ENCODE measurements at regions of chr14 and their contacts with region 1.

Region 1: GRCh38 chr14:67704484-67705089 is 2.9 kb downstream of the RDH12 start:
- DNase-seq: no peak
- ATAC-seq: peak; percentile 94
- H3K4me3 Mint-ChIP-seq: no peak overlapping the region
- H3K27ac Mint-ChIP-seq: no peak overlapping the region
- H3K4me1 Mint-ChIP-seq: 0 out of 2 replicates have a peak, but pooled peaks cover 3% of the 10 kb centered on the region
- H3K27me3 Mint-ChIP-seq: no peaks in the 10 kb centered on the region
- CTCF ChIP-seq: no peak

Region 2: GRCh38 chr14:67420102-67420830 is 284.3 kb before region 1 on chr14:
- CTCF ChIA-PET with region 1: interaction called, 15 read pairs
- POLR2A ChIA-PET with region 1: no interaction called
- DNase-seq: peak; percentile 85
- ATAC-seq: peak; percentile 93
- H3K4me3 Mint-ChIP-seq: no peak overlapping the region
- H3K27ac Mint-ChIP-seq: no peak overlapping the region
- H3K4me1 Mint-ChIP-seq: no peaks in the 10 kb centered on the region
- H3K27me3 Mint-ChIP-seq: no peaks in the 10 kb centered on the region; the same call in 1 of the 2 replicates
- CTCF ChIP-seq: peak; percentile 62; the same call in 1 of the 2 replicates

Region 3: GRCh38 chr14:67541448-67542387 is 162.9 kb before region 1 on chr14:
- CTCF ChIA-PET with region 1: interaction called, 10 read pairs
- POLR2A ChIA-PET with region 1: no interaction called
- DNase-seq: peak; percentile 67
- ATAC-seq: peak; percentile 91
- H3K4me3 Mint-ChIP-seq: peak overlapping the region; percentile 63
- H3K27ac Mint-ChIP-seq: peak overlapping the region; percentile 99
- H3K4me1 Mint-ChIP-seq: peaks cover 50% of the 10 kb centered on the region
- H3K27me3 Mint-ChIP-seq: no peaks in the 10 kb centered on the region
- CTCF ChIP-seq: no peak

Region 4: GRCh38 chr14:67599698-67600561 is 104.7 kb before region 1 on chr14 and contains the start of gene PIGH:
- CTCF ChIA-PET with region 1: interaction called, 34 read pairs
- POLR2A ChIA-PET with region 1: interaction called, 3 read pairs
- DNase-seq: peak; percentile 92
- ATAC-seq: peak; percentile 97
- H3K4me3 Mint-ChIP-seq: peak within 1 kb of the TSS; percentile 90
- H3K27ac Mint-ChIP-seq: peak within 1 kb of the TSS; percentile 88
- H3K4me1 Mint-ChIP-seq: peaks cover 8% of the 10 kb centered on the region
- H3K27me3 Mint-ChIP-seq: peaks cover 56% of the 10 kb centered on the region
- CTCF ChIP-seq: 0 out of 2 replicates have a peak, but pooled peaks have one; percentile 22
- total RNA-seq, gene PIGH: 6.6 to 7.8 TPM (median 6.8 TPM) in 3 replicates

Region 5: DNA sequence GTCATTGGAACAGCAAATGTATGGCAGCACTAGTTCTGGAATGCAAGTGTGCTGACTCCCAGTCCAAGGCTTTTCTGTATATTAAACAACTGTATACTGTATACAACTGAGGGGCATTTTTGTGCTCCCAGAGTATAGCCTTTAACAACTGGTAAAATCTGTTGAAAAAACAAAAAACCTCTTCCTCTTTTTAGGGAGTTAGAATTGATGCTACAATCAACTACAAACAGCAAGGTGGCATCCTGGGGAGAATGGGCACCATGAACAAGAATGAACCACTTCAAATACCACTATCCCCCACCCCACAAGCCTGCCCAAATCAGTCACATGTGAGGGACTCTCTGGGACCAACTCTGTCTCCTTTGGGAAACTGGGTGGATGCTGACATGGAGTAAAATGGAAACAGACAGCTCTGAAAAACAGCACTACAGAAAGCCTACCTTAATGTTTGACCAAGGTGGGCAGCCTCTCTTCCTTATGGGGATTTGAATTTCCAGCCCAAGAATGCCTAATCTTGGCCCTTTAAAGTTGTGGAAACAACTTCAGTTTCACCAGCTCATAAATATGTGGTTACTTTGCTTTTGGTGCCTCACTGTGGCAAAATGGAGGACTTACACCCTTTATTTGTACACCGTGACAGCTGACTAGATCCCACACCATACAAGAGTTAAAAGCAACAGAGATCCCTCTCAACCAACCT is 37.7 kb before region 1 on chr14:
- CTCF ChIA-PET with region 1: interaction called, 21 read pairs
- POLR2A ChIA-PET with region 1: interaction called, 3 read pairs
- DNase-seq: no peak
- ATAC-seq: peak; percentile 93
- H3K4me3 Mint-ChIP-seq: no peak overlapping the region
- H3K27ac Mint-ChIP-seq: peak overlapping the region; percentile 85
- H3K4me1 Mint-ChIP-seq: peaks cover 13% of the 10 kb centered on the region
- H3K27me3 Mint-ChIP-seq: no peaks in the 10 kb centered on the region
- CTCF ChIP-seq: no peak

Region 6: GRCh38 chr14:67722293-67722692 is 17.7 kb after region 1 on chr14:
- CTCF ChIA-PET with region 1: interaction called, 18 read pairs
- POLR2A ChIA-PET with region 1: interaction called, 3 read pairs
- DNase-seq: peak; percentile 35
- ATAC-seq: peak; percentile 99
- H3K4me3 Mint-ChIP-seq: peak overlapping the region; percentile 47
- H3K27ac Mint-ChIP-seq: no peak overlapping the region
- H3K4me1 Mint-ChIP-seq: no peaks in the 10 kb centered on the region; the same call in 1 of the 2 replicates
- H3K27me3 Mint-ChIP-seq: peaks cover 13% of the 10 kb centered on the region
- CTCF ChIP-seq: no peak

Region 7: GRCh38 chr14:67806246-67806645 is 101.7 kb after region 1 on chr14:
- CTCF ChIA-PET with region 1: no interaction called
- POLR2A ChIA-PET with region 1: no interaction called
- DNase-seq: no peak
- ATAC-seq: no peak
- H3K4me3 Mint-ChIP-seq: no peak overlapping the region
- H3K27ac Mint-ChIP-seq: no peak overlapping the region
- H3K4me1 Mint-ChIP-seq: no peaks in the 10 kb centered on the region
- H3K27me3 Mint-ChIP-seq: no peaks in the 10 kb centered on the region
- CTCF ChIP-seq: no peak

Measured in WTC11 (cell line).